ENCODE measurements at regions of chr17 and their contacts with region 1.

Region 1: DNA sequence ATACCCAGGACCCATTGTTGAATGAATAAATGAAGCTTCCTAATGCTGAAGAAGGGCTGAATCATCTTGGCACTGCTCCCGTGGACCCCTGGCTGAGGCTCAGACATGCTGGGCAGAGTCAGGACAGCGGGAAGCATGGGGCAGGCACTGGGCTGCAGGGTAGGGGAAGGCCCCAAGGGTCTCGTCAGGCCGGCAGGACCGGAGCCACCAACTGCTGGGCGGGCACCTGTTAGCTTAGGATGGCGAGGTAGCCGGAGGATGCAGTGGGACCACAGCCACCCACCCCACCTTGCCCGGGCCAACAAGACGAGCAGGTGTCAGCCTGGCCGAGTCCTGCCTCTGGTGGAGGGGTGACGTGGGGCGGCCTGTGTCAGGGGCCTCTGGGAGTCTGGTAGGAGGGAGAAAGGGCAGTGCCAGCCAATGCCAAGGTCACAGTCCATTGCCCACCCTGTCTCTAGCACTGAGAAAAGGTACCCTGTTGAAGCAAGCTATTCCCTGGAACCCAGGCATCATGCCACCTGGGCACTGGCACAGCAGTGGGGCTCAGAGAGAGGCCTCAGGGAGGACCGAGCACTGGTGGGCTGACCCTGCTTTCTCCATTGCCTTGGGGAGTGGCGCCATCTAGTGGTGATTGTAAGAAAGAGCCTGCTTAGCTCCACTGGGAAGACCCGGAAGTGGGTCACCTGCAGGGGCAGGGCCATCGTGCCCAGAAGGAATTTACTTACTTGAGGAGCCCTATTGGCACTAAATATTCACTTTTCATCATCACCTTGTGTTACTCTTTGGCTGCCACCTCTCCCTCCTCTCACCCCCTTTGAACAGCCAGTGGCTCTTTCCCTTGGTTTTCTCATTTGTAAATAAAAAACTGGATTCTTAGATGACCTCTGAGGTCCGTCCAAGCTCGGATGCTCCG is 3.0 kb upstream of the DLX3 start:
- DNase-seq: peak; percentile 72 to 93 (median 86)
- ATAC-seq: peak; percentile 77 to 80
- H3K4me3 Mint-ChIP-seq: peak overlapping the region in 5 of 10 donors; percentile 7 to 72 (median 30)
- H3K27ac Mint-ChIP-seq: no peak overlapping the region
- H3K4me1 Mint-ChIP-seq: peaks cover 25 to 33% (median 32%) of the 10 kb centered on the region in 4 donors
- H3K27me3 Mint-ChIP-seq: peaks cover 44 to 80% (median 73%) of the 10 kb centered on the region in 5 donors

Region 2: GRCh38 chr17:49848019-49848473 is 150.0 kb before region 1 on chr17 and contains the start of gene TAC4:
- POLR2A ChIA-PET with region 1: interaction called, 10 read pairs
- DNase-seq: no peak
- ATAC-seq: no peak
- H3K4me3 Mint-ChIP-seq: peak within 1 kb of the TSS in 2 of 10 donors; percentile 19 to 45
- H3K27ac Mint-ChIP-seq: peak within 1 kb of the TSS; percentile 16 to 95 (median 62)
- H3K4me1 Mint-ChIP-seq: peaks cover 20 to 34% (median 29%) of the 10 kb centered on the region in 4 donors
- H3K27me3 Mint-ChIP-seq: no peaks in the 10 kb centered on the region
- polyA plus RNA-seq, gene TAC4: not detected

Region 3: DNA sequence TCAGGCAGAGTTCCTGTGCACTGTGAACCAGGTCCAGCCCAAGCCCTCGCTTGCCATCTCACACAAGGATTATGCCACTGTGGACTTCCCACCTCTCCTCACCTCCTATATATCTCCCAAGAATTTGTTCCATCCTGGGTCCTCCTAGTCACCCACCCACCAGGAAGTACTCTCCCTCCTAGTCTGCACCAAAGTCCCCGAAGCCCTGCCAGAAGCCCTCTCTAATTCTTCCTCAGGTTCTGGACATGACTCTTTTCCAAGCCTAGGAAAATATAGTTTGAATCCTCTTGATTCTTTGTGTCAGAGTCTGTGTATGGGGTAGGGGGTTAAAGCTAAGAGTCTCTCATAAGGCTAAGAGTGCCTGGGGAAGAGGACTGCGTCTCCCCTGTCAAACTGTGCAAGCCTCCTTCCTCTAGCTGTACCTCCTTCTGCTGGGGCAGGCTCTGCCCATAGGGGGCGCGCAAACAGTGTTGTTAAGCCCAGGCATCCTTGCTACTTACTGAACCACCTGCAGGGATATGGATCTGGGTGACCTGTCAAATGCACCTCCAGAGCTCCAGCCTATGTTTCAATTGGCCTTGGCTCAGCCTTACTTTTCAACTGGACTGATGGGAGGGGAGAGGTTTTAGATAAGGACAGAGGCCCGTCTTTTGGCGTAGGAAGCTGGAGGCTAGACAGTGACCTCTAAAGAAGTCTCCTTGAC is 45.7 kb before region 1 on chr17:
- POLR2A ChIA-PET with region 1: interaction called, 10 read pairs
- DNase-seq: peak; percentile 65 to 90 (median 76)
- ATAC-seq: peak; percentile 100
- H3K4me3 Mint-ChIP-seq: no peak overlapping the region
- H3K27ac Mint-ChIP-seq: no peak overlapping the region
- H3K4me1 Mint-ChIP-seq: peaks cover 0 to 8% (median 4%) of the 10 kb centered on the region in 4 donors
- H3K27me3 Mint-ChIP-seq: peaks cover 27 to 63% (median 39%) of the 10 kb centered on the region in 5 donors

Measured in naive thymus-derived CD8-positive, alpha-beta T cell (primary cell).